Colonic mucosa (tissue), 4 donors: ENCODE measurements at regions of chr19 and their contacts with region 1.

Region 1: GRCh38 chr19:56333505-56333904 is 18.9 kb upstream of the ZSCAN5A start:
- DNase-seq: peak; percentile 60
- H3K4me3 ChIP-seq: no peak overlapping the region
- H3K27ac ChIP-seq: no peak overlapping the region
- H3K4me1 ChIP-seq: no peaks in the 10 kb centered on the region
- H3K27me3 ChIP-seq: no peaks in the 10 kb centered on the region
- CTCF ChIP-seq: peak; percentile 58

Region 2: GRCh38 chr19:56066152-56067023 is 267.1 kb before region 1 on chr19:
- intact Hi-C with region 1: loop called (anchors 5 kb)
- DNase-seq: peak; percentile 69
- H3K4me3 ChIP-seq: no peak overlapping the region
- H3K27ac ChIP-seq: no peak overlapping the region
- H3K4me1 ChIP-seq: no peaks in the 10 kb centered on the region
- H3K27me3 ChIP-seq: no peaks in the 10 kb centered on the region
- CTCF ChIP-seq: peak; percentile 87

Region 3: DNA sequence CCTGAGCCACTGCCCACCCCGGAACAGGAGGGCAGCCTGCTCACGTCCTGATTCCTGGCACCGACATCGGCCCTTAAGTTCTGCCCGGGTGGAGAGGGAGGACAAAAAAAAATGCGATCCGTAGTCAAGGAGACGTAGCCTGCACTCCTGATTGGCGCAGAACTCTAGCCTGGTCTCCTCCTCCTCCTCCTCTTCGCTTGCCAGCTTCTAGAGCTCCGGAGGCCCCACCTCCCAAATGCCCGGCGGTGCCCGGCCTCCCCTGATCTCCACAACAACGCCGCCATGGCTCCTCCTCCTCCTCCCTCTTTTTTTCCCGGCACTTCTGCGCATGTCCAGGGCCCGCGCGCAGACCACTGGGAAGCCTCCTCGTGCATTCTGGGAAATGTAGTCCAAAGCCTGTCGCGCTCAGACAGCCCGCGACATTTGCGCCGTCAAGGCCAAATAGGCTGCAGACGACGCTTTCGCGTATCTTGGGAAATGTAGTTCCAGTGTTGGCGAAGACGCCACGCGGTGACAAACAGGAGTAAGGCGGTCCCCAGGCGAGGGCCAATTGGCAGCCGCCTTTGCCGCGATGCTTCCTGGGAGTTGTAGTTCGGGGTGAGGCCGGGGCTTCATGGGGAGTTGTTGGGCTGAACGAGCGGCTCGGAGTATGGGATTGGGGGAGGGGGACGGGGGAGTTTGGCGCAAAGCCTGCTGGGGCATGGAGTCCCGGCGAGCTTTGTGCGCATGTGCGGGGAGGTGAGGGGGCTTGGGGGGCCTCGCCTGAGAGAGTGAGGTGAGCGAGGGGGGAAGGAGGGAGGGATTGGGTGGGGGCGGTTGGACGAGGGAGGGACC is 192.7 kb before region 1 on chr19 and contains the start of gene ZNF444:
- intact Hi-C with region 1: no loop called
- DNase-seq: peak; percentile 99
- H3K4me3 ChIP-seq: peak within 1 kb of the TSS; percentile 44
- H3K27ac ChIP-seq: peak within 1 kb of the TSS; percentile 89
- H3K4me1 ChIP-seq: peaks cover 10% of the 10 kb centered on the region
- H3K27me3 ChIP-seq: no peaks in the 10 kb centered on the region
- CTCF ChIP-seq: no peak
- total RNA-seq, gene ZNF444: 20.5 to 50.9 TPM

Region 4: DNA sequence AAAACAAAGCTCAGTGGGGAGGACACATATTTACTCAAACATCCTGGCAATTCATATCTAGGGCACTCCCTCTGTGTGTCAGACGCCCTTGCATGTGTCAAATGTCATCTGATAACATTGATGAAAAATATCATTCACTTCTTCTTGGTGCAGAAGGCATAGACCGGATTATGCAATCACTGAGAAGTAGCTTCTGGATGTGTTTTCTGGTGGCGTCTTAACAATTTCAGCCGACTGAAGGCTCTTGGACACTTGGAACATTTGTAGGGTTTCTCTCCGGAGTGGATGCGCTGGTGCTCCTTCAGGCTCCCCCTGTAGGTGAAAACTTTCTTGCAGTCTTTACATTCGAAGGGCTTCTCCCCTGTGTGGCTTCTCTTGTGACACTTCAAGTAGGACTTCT is 112.1 kb before region 1 on chr19:
- intact Hi-C with region 1: no loop called
- DNase-seq: no peak
- H3K4me3 ChIP-seq: no peak overlapping the region
- H3K27ac ChIP-seq: no peak overlapping the region
- H3K4me1 ChIP-seq: no peaks in the 10 kb centered on the region
- H3K27me3 ChIP-seq: peaks cover 7% of the 10 kb centered on the region
- CTCF ChIP-seq: no peak

Region 5: DNA sequence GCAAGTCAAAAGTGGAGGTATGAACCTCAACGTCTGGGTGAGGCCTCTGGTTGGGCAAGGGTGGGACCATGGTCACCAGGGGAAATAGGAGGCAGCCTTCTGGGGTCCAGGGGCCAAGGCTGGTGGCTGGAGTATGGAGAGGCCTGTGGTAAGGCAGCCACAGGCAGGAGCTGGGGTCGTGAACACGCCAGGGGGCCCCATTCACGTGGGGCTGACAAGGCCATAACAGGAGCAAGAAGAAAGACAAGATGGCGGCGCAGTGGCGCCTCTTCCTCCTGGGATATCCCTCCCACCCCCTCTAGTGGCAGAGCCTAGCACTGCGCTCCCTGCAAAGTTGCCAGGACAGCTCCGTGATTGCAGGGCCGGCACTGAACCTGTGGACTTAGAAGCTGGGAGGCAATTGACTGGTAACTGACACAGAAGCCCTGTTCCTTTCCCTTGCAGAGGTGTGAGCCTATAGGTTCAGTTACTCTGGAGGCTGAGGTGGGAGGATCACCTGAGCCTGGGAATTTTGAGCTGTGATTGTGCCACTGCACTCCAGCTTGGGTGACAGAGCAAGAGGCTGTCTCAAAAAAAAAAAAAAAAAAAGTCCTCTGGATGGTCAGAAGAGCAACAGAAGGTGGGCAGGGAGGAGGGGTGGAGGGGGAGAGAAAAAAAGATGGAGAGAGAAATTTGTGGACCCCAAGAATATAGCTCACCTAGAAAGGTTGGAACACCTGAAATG is 80.6 kb before region 1 on chr19:
- intact Hi-C with region 1: loop called (anchors 2 kb)
- DNase-seq: peak; percentile 82
- H3K4me3 ChIP-seq: no peak overlapping the region
- H3K27ac ChIP-seq: no peak overlapping the region
- H3K4me1 ChIP-seq: no peaks in the 10 kb centered on the region
- H3K27me3 ChIP-seq: no peaks in the 10 kb centered on the region
- CTCF ChIP-seq: peak; percentile 75

Region 6: GRCh38 chr19:56383826-56384605 is 50.5 kb after region 1 on chr19:
- intact Hi-C with region 1: no loop called
- DNase-seq: no peak
- H3K4me3 ChIP-seq: no peak overlapping the region
- H3K27ac ChIP-seq: no peak overlapping the region
- H3K4me1 ChIP-seq: no peaks in the 10 kb centered on the region
- H3K27me3 ChIP-seq: no peaks in the 10 kb centered on the region
- CTCF ChIP-seq: no peak

Region 7: GRCh38 chr19:56547535-56547934 is 214.0 kb after region 1 on chr19:
- intact Hi-C with region 1: no loop called
- DNase-seq: no peak
- H3K4me3 ChIP-seq: no peak overlapping the region
- H3K27ac ChIP-seq: no peak overlapping the region
- H3K4me1 ChIP-seq: no peaks in the 10 kb centered on the region
- H3K27me3 ChIP-seq: no peaks in the 10 kb centered on the region
- CTCF ChIP-seq: no peak